ENCODE measurements at regions of chr1 and their contacts with region 1.

Region 1: DNA sequence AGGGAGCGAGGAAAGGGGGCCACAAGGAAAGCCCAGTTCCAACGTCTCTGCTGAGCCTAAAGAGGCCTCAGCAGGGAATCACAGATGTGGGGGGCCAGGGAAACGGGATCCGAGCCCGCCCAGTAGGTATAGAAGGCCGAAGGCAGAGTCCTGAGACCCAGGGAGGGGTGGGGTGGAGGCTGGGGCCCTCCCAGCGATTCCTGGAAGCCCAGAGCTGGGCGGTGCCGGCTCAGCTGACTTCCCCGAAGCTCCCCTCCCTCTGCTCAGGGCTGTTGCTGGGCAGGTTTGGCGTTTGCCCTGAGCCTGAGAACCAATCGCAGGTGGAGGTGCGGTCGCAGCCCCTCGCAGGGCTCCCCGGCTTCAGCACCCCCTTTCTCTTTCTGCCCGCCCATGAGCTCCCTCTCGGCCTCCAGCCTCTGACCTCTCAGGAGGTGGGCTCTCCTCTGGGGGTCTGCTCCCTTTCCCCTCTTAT is 12.8 kb downstream of the ADAMTSL4 start:
- DNase-seq: peak; percentile 87 to 95 (median 92)
- H3K4me3 ChIP-seq: peak overlapping the region; percentile 48 to 81 (median 75)
- H3K27ac ChIP-seq: peak overlapping the region; percentile 94 to 97
- H3K4me1 ChIP-seq: peaks cover 34 to 90% (median 80%) of the 10 kb centered on the region in 4 experiments
- H3K27me3 ChIP-seq: no peaks in the 10 kb centered on the region

Region 2: DNA sequence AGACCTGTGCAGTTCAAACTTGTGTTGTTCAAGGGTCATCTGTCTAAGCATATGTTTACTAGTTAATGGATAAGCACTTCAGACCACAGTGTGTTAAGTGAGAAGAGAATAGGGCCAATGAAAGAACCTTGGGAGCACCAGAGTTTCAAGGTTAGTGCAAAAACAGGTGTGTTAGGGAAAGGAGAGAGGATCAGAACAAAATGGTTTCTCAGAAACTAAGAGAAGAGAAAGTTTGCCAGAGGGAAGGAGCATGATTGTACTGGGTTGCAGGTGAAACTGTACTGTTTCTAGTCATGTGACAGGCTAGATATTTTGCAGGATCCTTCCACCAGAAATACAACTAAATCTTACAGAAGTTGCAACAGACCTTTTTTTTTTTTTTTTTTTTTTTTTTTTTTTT is 174.8 kb before region 1 on chr1:
- CTCF ChIA-PET with region 1: no interaction called
- POLR2A ChIA-PET with region 1: no interaction called
- DNase-seq: peak in 1 of 3 donors; percentile 17
- H3K4me3 ChIP-seq: no peak overlapping the region
- H3K27ac ChIP-seq: no peak overlapping the region
- H3K4me1 ChIP-seq: peaks cover 0 to 5% (median 1%) of the 10 kb centered on the region in 4 experiments
- H3K27me3 ChIP-seq: no peaks in the 10 kb centered on the region

Region 3: GRCh38 chr1:150515328-150516048 is 46.5 kb before region 1 on chr1 and contains the start of gene FALEC:
- CTCF ChIA-PET with region 1: interaction called, 11 read pairs
- POLR2A ChIA-PET with region 1: interaction called, 3 read pairs
- DNase-seq: peak; percentile 89 to 93 (median 93)
- H3K4me3 ChIP-seq: peak within 1 kb of the TSS; percentile 54 to 95 (median 80)
- H3K27ac ChIP-seq: peak within 1 kb of the TSS in 1 of 2 experiments; percentile 65
- H3K4me1 ChIP-seq: peaks cover 0 to 18% (median 17%) of the 10 kb centered on the region in 4 experiments
- H3K27me3 ChIP-seq: no peaks in the 10 kb centered on the region

Region 4: GRCh38 chr1:150548632-150549495 is 13.1 kb before region 1 on chr1 and contains the start of gene ADAMTSL4:
- CTCF ChIA-PET with region 1: interaction called, 59 read pairs
- POLR2A ChIA-PET with region 1: interaction called, 8 read pairs
- DNase-seq: peak in 2 of 3 donors; percentile 65 to 70
- H3K4me3 ChIP-seq: peak within 1 kb of the TSS; percentile 36 to 73 (median 56)
- H3K27ac ChIP-seq: peak within 1 kb of the TSS in 1 of 2 experiments; percentile 70
- H3K4me1 ChIP-seq: peaks cover 4 to 52% (median 48%) of the 10 kb centered on the region in 4 experiments
- H3K27me3 ChIP-seq: no peaks in the 10 kb centered on the region

Region 5: GRCh38 chr1:150578965-150579798 is 17.2 kb after region 1 on chr1 and contains the start of gene MCL1:
- CTCF ChIA-PET with region 1: interaction called, 150 read pairs
- POLR2A ChIA-PET with region 1: interaction called, 77 read pairs
- DNase-seq: peak; percentile 94 to 98 (median 97)
- H3K4me3 ChIP-seq: peak within 1 kb of the TSS; percentile 91 to 100 (median 99)
- H3K27ac ChIP-seq: peak within 1 kb of the TSS; percentile 97 to 98
- H3K4me1 ChIP-seq: peaks cover 25 to 34% (median 32%) of the 10 kb centered on the region in 4 experiments
- H3K27me3 ChIP-seq: no peaks in the 10 kb centered on the region

Region 6: DNA sequence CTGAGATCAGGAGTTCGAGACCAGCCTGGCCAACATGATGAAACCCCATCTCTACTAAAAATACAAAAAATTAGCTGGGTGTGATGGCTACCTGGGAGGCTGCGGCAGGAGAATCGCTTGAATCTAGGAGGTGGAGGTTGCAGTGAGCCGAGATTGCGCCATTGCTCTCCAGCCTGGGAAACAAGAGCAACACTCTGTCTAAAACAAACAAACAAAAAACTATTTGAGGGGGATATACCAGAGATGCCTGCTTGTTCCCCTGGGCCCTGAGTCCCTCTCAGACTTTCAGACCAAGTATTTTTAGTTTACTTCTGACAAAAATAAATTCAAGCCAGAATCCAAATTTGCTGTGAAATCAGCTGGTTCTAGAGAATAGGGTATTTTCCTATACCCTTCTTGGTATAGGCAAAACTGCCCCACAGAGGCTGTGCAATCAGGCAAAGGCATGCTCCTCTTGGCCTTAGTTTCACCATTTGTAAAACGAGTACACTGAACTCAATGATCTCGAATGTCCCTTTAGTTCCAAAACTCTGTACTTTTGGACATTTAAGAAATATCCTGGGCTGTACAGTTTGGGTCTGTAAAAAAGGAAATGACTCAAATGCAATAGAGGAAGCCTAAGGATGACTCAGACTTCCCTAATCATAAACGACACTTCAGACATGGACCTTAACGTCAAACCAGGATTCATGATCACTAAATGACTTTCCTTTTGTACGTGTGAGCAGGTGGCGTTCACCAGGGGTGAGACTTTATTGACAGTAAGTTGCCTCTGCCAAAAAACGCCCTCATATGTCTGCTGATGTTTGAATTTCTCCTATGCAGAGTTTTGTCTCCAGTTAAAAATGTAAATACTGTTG is 51.3 kb after region 1 on chr1:
- CTCF ChIA-PET with region 1: interaction called, 152 read pairs
- POLR2A ChIA-PET with region 1: interaction called, 4 read pairs
- DNase-seq: peak; percentile 93 to 98 (median 97)
- H3K4me3 ChIP-seq: peak overlapping the region in 6 of 7 experiments; percentile 22 to 68 (median 44)
- H3K27ac ChIP-seq: peak overlapping the region; percentile 99
- H3K4me1 ChIP-seq: peaks cover 19 to 62% (median 53%) of the 10 kb centered on the region in 4 experiments
- H3K27me3 ChIP-seq: no peaks in the 10 kb centered on the region

Region 7: GRCh38 chr1:150621497-150622302 is 59.7 kb after region 1 on chr1:
- CTCF ChIA-PET with region 1: interaction called, 152 read pairs
- POLR2A ChIA-PET with region 1: interaction called, 5 read pairs
- DNase-seq: peak; percentile 71 to 84 (median 81)
- H3K4me3 ChIP-seq: peak overlapping the region in 2 of 7 experiments; percentile 30 to 38
- H3K27ac ChIP-seq: peak overlapping the region; percentile 19 to 67
- H3K4me1 ChIP-seq: peaks cover 15 to 41% (median 25%) of the 10 kb centered on the region in 4 experiments
- H3K27me3 ChIP-seq: no peaks in the 10 kb centered on the region

Region 8: GRCh38 chr1:150629115-150629928 is 67.3 kb after region 1 on chr1 and contains the start of gene ENSA:
- CTCF ChIA-PET with region 1: interaction called, 152 read pairs
- POLR2A ChIA-PET with region 1: interaction called, 6 read pairs
- DNase-seq: peak; percentile 100
- H3K4me3 ChIP-seq: peak within 1 kb of the TSS; percentile 61 to 92 (median 82)
- H3K27ac ChIP-seq: peak within 1 kb of the TSS; percentile 97 to 99
- H3K4me1 ChIP-seq: peaks cover 16 to 23% (median 19%) of the 10 kb centered on the region in 4 experiments
- H3K27me3 ChIP-seq: no peaks in the 10 kb centered on the region

Measured in common myeloid progenitor, CD34-positive (primary cell).